HepG2 (cell line): ENCODE measurements at regions of chr4 and their contacts with region 1.

Region 1: DNA sequence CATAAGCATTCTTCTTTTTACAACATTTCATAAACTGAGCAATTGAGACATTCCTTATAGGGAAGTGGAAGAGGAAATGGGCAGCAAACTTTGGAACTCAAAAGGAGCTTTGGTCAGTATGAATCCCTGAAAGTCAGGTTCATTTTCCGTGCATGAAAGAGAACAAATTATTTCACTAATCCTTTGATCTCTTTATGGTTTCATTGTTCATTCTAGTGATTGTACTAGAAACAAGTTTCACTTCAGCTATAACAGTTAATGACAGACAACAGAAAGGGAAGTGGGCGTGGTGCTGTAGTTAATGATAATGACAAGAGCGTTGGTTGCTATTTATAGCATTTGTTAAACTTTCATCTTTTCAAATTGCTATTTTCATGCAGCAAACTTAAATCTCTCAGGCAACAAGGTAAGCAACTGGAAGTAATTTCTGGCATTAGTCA is 98.3 kb downstream of the AREG start:
- DNase-seq: no peak
- ATAC-seq: no peak
- H3K4me3 ChIP-seq: no peak overlapping the region
- H3K27ac ChIP-seq: no peak overlapping the region
- H3K4me1 ChIP-seq: peaks cover 23% of the 10 kb centered on the region
- H3K27me3 ChIP-seq: no peaks in the 10 kb centered on the region
- CTCF ChIP-seq: no peak
- EP300 ChIP-seq: no peak
- POLR2A ChIP-seq: no peak
- RAD21 ChIP-seq: no peak

Region 2: GRCh38 chr4:74583694-74584087 is 40.4 kb after region 1 on chr4:
- CTCF ChIA-PET with region 1: no interaction called
- POLR2A ChIA-PET with region 1: no interaction called
- in situ Hi-C with region 1: no loop called
- intact Hi-C with region 1: loop called (anchors 1 kb)
- DNase-seq: peak; percentile 49
- ATAC-seq: peak; percentile 51; the same call in 1 of the 3 replicates
- H3K4me3 ChIP-seq: no peak overlapping the region
- H3K27ac ChIP-seq: no peak overlapping the region
- H3K4me1 ChIP-seq: peaks cover 19% of the 10 kb centered on the region
- H3K27me3 ChIP-seq: no peaks in the 10 kb centered on the region
- CTCF ChIP-seq: no peak
- EP300 ChIP-seq: no peak
- POLR2A ChIP-seq: no peak
- RAD21 ChIP-seq: no peak